ENCODE measurements at regions of chr5 and their contacts with region 1.

Region 1: DNA sequence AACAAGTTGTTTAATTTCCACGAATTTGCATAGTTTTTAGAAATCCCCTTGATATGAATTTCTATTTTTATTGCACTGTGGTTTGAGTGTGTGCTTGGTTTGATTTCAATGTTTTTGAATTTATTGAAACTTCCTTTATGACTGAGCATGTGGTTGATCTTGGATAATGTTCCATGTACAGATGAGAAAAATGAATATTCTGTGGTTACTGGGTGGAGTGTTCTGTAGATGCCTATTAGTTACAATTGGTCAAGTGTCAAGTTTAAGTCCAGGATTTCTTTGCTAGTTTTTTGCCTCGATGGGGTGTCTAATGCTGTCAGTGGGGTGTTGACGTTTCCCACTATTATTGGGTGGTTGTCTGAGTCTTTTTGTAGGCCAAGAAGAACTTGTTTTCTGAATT is 319.5 kb upstream of the ACTBL2 start:
- DNase-seq: no peak
- ATAC-seq: no peak
- H3K4me3 ChIP-seq: no peak overlapping the region
- H3K27ac ChIP-seq: peak overlapping the region; percentile 25; the same call in 1 of the 2 replicates
- H3K4me1 ChIP-seq: no peaks in the 10 kb centered on the region
- H3K27me3 ChIP-seq: no peaks in the 10 kb centered on the region
- CTCF ChIP-seq: no peak

Region 2: DNA sequence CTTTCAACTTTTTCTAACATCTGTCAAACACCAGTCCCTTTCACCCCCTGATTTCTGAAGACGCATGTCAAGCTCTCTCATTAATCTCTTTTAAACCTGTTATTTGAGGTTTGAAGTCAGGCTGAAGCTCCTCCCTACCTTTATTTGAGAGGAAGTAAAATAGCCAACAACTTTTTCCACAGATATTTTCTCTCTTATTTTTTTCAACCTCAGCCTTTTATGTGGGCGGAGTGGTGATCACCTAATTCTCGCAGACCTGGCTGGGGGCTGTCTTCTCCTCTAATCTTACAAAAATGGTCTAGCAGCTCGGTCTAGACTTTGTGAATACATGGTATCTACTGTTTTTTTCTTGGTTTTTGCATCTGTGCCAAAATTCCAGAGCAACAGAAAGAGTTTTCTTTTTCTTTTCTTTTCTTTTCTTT is 76.2 kb after region 1 on chr5:
- CTCF ChIA-PET with region 1: no interaction called
- POLR2A ChIA-PET with region 1: interaction called, 18 read pairs
- in situ Hi-C with region 1: no loop called
- intact Hi-C with region 1: no loop called
- DNase-seq: no peak
- ATAC-seq: no peak
- H3K4me3 ChIP-seq: no peak overlapping the region
- H3K27ac ChIP-seq: peak overlapping the region; percentile 56; the same call in 1 of the 2 replicates
- H3K4me1 ChIP-seq: no peaks in the 10 kb centered on the region
- H3K27me3 ChIP-seq: no peaks in the 10 kb centered on the region
- CTCF ChIP-seq: no peak